MCF 10A (cell line): ENCODE measurements at regions of chr1 and their contacts with region 1.

Region 1: GRCh38 chr1:212284744-212285684 is at the start of gene PPP2R5A:
- DNase-seq: peak; percentile 100
- H3K4me3 Mint-ChIP-seq: peak within 1 kb of the TSS; percentile 94
- H3K27ac Mint-ChIP-seq: peak within 1 kb of the TSS; percentile 99
- H3K4me1 Mint-ChIP-seq: peaks cover 29% of the 10 kb centered on the region
- H3K27me3 Mint-ChIP-seq: no peaks in the 10 kb centered on the region
- CTCF ChIP-seq: peak; percentile 20
- total RNA-seq, gene PPP2R5A: 37.5 and 38.6 TPM in 2 replicates

Region 2: DNA sequence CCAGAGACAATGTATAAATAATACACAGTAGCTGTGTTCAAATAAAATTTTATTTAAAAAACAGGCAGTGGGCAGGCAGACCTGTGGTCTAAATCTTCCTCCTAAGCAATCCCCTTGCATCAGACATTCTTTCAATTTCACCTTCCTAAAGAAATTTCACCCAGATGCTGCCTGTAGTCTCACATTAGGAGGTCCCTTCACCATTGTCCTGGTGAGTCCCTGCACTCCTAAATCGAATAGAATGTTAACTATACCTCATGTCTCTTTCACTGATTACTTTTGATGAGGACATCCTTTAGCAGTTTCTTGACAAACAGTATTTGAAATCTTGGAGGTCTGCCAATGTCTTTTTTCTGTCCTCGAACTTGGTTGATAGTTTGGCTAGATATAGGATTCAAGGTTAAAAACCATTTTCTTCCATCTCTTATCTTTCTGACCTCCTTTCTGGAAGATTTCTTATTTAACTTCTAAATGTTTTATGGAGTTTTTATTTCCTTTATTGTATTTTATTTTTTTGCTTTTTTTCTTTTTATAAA is 532.0 kb before region 1 on chr1:
- CTCF ChIA-PET with region 1: no interaction called
- POLR2A ChIA-PET with region 1: no interaction called
- intact Hi-C with region 1: no loop called
- DNase-seq: no peak
- H3K4me3 Mint-ChIP-seq: no peak overlapping the region
- H3K27ac Mint-ChIP-seq: no peak overlapping the region
- H3K4me1 Mint-ChIP-seq: no peaks in the 10 kb centered on the region
- H3K27me3 Mint-ChIP-seq: no peaks in the 10 kb centered on the region
- CTCF ChIP-seq: no peak

Region 3: DNA sequence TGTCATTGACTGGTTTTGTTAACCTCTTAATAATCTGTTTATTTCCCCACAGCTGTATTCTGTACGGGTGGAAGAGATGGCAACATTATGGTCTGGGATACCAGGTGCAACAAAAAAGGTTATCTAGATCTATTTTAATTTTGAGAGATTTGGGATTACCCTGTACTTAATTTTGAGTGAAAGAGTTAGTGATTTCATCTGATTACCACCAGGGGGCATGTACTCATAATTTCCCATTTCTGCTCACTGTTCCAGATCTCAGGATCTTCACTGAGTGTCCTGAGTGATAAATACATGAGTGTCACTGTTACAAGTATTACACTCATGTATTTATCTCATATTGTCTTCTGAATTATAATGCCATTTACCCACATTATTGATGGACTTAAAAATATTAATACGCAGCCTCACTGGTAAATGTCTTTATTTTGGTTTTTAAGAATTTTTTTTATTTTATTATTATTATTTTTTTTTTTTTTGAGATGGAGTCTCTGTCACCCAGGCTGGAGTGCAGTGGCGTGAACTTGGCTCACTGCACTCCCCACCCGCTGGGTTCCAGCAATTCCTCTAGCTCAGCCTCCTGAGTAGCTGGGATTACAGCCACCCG is 222.1 kb before region 1 on chr1:
- CTCF ChIA-PET with region 1: interaction called, 55 read pairs
- POLR2A ChIA-PET with region 1: interaction called, 6 read pairs
- intact Hi-C with region 1: no loop called
- DNase-seq: peak; percentile 73
- H3K4me3 Mint-ChIP-seq: no peak overlapping the region
- H3K27ac Mint-ChIP-seq: no peak overlapping the region
- H3K4me1 Mint-ChIP-seq: peaks cover 12% of the 10 kb centered on the region
- H3K27me3 Mint-ChIP-seq: no peaks in the 10 kb centered on the region
- CTCF ChIP-seq: peak; percentile 84

Region 4: DNA sequence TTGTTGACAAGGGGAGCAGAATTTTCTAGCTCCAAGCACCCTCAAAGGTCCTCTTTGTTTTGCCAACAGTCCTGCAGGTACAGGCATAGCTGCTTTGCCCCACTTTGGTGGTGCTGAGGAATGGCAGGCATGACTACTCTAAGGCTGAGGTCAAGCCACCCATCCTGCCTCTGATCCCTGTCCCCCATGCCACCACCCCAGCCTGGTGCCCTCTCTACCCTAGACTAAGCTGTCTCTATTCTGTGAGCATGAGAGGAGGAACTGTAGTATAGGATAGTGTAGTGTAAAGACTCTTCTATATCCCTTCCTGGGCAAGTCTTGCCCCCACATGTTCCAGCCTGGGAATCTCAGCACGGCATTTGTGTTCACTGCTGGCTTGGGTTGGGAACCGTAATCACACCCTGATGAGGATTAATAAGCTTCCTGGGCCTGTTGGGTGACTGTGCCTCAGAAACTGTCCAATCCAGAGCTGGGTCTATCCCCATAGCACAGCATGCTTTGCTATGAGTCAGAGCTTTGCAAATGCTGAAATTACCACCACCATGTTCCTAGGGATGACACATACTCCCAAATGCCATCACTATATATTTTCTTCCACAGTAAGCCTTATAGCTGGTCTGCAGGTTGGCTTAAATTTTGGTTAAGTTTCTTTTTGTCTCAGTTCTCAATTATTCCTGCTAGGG is 105.5 kb before region 1 on chr1:
- CTCF ChIA-PET with region 1: interaction called, 6 read pairs
- POLR2A ChIA-PET with region 1: interaction called, 15 read pairs
- intact Hi-C with region 1: loop called (anchors 1 kb)
- DNase-seq: peak; percentile 96
- H3K4me3 Mint-ChIP-seq: no peak overlapping the region
- H3K27ac Mint-ChIP-seq: peak overlapping the region; percentile 71
- H3K4me1 Mint-ChIP-seq: peaks cover 9% of the 10 kb centered on the region
- H3K27me3 Mint-ChIP-seq: no peaks in the 10 kb centered on the region
- CTCF ChIP-seq: no peak

Region 5: DNA sequence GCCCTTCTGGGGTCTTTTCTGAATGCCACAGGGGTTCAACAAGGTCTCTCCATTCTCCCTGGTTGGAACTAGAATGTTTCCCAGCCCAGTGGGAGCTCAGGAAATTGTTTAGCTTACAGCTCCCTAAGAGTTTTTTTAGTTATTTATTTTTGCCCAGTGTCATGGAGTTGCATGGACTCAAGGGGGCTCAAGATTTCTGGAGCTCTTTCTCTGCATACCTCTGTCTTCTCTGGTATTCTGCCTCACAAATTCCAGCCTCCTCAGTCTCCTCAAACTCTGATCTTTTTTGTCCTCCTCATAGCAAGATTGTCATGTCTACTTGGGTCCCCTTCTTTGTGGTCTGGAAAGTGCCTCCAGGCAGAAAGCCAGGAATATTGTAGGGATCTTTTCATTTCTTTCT is 15.7 kb before region 1 on chr1:
- CTCF ChIA-PET with region 1: interaction called, 4 read pairs
- POLR2A ChIA-PET with region 1: interaction called, 116 read pairs
- intact Hi-C with region 1: no loop called
- DNase-seq: no peak
- H3K4me3 Mint-ChIP-seq: no peak overlapping the region
- H3K27ac Mint-ChIP-seq: no peak overlapping the region
- H3K4me1 Mint-ChIP-seq: no peaks in the 10 kb centered on the region
- H3K27me3 Mint-ChIP-seq: no peaks in the 10 kb centered on the region
- CTCF ChIP-seq: no peak

Region 6: DNA sequence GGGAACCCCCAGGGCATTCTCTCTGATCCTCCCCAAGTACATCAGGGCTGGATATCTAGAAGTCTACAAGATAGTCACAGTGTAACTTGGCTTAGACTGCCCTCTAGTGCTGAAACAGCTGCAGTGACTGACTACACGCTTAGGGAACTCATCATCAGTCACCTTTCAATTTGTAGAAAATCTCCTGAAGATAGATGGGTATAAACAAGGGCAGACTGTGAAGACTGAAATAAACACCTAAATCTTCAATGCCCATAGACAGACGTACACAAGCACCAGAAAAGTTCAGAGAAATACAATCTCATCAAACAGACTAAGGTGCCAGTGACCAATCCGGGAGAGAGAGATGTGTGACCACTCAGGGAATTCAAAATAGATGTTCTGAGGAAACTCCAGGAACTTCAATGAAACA is 83.1 kb after region 1 on chr1:
- CTCF ChIA-PET with region 1: interaction called, 12 read pairs
- POLR2A ChIA-PET with region 1: interaction called, 15 read pairs
- intact Hi-C with region 1: no loop called
- DNase-seq: peak; percentile 93
- H3K4me3 Mint-ChIP-seq: no peak overlapping the region
- H3K27ac Mint-ChIP-seq: peak overlapping the region; percentile 5
- H3K4me1 Mint-ChIP-seq: peaks cover 15% of the 10 kb centered on the region
- H3K27me3 Mint-ChIP-seq: no peaks in the 10 kb centered on the region
- CTCF ChIP-seq: peak; percentile 99

Region 7: DNA sequence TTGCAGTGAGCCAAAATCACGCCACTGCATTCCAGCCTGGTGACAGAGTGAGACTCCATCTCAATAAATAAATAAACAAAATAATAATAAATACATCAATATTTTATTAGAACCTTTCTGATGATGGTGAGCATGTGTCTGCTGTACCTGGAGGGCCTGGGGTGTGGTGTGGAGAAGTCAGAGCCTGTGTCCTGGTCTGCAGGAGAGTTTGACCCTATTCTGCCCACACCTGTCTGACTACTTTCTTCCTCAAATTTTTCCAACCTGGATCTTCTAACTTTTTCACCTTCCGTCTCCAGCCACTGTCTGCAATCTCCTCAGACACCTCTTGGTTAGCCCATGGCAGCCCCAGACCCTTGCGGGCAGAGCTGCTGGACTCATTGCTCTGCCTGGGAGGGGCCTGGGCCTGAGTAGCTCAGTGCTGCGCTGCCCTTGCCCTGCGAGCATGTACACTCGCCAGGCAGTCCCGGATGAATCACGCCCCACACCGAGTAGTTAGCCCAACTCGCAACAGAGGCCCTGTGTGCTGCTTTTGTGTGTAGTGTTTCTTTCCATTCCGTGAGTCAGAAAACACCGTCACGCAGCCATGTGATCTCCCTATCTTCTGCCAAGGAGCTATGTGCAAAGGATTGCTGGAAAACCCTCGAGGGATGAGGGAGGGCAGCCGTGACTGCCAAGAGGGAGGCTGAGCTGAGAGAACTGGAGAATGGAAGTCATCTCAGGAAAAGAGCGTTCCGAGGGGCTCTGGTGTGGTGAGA is 184.9 kb after region 1 on chr1:
- CTCF ChIA-PET with region 1: no interaction called
- POLR2A ChIA-PET with region 1: interaction called, 10 read pairs
- intact Hi-C with region 1: no loop called
- DNase-seq: peak; percentile 96
- H3K4me3 Mint-ChIP-seq: peak overlapping the region; percentile 49
- H3K27ac Mint-ChIP-seq: peak overlapping the region; percentile 90
- H3K4me1 Mint-ChIP-seq: peaks cover 10% of the 10 kb centered on the region
- H3K27me3 Mint-ChIP-seq: no peaks in the 10 kb centered on the region
- CTCF ChIP-seq: no peak

Region 8: DNA sequence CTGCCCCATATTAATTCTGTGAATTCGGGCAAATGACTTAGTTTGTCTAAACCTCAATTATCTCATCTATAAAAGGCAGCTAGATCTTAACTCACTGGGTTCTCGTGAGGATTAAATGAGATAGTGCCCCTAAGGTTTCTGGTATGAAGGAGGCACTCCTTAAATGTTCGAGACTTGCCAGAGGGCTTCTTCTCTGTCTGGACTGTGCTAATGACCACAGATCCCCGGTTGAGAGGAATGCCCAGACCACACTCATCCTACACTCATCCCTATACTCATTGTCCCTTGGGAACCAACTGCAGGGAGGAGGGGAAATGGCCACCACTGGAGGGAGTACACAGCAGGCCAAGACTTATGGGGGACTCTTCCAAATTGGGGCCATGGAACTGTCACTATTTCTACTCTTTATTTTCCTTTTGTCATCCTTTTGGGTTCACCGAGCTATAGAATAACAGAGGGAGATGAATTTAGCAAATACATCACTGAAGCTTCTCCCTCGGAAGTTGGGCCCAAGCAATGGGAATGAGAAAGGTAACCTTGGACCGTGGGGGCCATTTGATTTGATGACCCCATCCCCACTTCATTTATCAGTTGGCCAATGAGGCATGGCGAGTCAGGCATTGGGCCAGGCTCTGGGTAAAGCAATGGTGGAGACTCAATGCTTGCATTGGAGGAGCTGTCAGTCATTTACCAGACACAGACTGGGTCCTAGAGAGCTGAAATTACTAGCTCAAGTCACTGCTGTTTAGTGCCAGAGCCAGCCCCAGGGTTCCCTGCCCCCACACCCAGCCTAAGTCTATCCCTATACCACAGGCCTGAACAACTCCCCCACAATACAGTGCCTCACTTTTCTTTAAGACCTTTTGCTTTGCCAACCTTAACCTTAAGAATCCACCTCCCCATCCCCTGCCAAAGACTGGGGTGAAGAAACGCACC is 328.7 kb after region 1 on chr1:
- CTCF ChIA-PET with region 1: no interaction called
- POLR2A ChIA-PET with region 1: no interaction called
- intact Hi-C with region 1: no loop called
- DNase-seq: no peak
- H3K4me3 Mint-ChIP-seq: no peak overlapping the region
- H3K27ac Mint-ChIP-seq: no peak overlapping the region
- H3K4me1 Mint-ChIP-seq: peaks cover 19% of the 10 kb centered on the region
- H3K27me3 Mint-ChIP-seq: peaks cover 26% of the 10 kb centered on the region
- CTCF ChIP-seq: no peak